ENCODE measurements at regions of chr17 and their contacts with region 1.

Region 1: GRCh38 chr17:63773381-63774140 is at the start of gene CCDC47:
- DNase-seq: peak; percentile 99
- H3K4me3 ChIP-seq: peak within 1 kb of the TSS; percentile 93 to 99
- H3K27ac ChIP-seq: peak within 1 kb of the TSS; percentile 94 to 98
- H3K4me1 ChIP-seq: peaks cover 3% of the 10 kb centered on the region
- H3K27me3 ChIP-seq: no peaks in the 10 kb centered on the region
- CTCF ChIP-seq: peak in 1 of 4 experiments; percentile 36
- POLR2A ChIP-seq: peak; percentile 99
- total RNA-seq, gene CCDC47: 50.3 to 90.8 TPM

Region 2: GRCh38 chr17:63827002-63827771 is 53.6 kb after region 1 on chr17 and contains the starts of genes FTSJ3 and PSMC5:
- intact Hi-C with region 1: loop called (anchors 5 kb)
- DNase-seq: peak; percentile 95
- H3K4me3 ChIP-seq: peak within 1 kb of the TSS; percentile 60 to 73
- H3K27ac ChIP-seq: peak within 1 kb of the TSS; percentile 89 to 90
- H3K4me1 ChIP-seq: peaks cover 5% of the 10 kb centered on the region
- H3K27me3 ChIP-seq: no peaks in the 10 kb centered on the region
- CTCF ChIP-seq: peak in 3 of 4 experiments; percentile 27 to 62 (median 55)
- POLR2A ChIP-seq: peak; percentile 62
- total RNA-seq, gene FTSJ3: 29.4 to 46.6 TPM
- total RNA-seq, gene PSMC5: 94.0 to 109 TPM

Region 3: DNA sequence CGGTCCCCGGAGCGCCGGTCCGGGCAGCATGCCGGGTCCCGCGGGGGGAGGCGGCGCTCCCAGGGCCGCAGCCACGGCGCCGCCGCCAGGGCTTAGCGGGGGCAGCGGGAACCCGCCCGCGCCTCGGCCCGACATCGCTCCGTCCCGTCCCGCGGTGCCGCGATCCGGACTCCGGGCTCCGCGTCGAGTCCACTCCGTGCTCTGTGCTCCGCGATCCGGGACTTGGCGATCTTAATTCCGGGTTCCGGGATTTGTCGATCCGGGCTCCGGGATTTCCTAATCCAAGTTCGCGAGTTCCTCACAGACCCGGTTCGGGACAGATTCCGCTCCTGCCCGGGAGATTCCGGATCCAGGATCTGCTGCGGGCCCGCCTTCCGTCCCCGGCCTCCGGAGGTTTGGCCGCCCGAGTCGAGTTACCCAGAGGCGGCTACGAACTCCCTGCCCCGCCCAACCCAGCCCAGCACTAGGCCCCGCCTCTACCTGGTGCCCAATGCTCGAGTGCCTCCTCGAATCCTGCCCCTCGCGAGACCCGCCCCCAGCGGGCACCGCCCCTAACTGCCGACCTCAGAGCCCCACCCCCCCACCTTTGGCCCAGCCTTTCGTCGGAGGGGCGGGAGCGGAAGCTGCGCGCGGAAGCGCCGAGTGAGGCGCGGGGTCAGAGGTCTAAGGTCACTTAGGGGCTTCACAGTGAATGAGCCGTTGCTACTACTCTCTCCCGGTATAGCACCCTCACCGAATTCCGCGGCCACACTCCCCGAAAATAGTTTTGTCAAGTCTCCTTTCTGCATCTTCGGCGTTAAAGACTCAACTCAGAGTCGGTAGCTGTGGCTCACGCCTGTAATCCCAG is 69.2 kb after region 1 on chr17 and contains the start of gene SMARCD2:
- intact Hi-C with region 1: loop called (anchors 5 kb)
- DNase-seq: peak; percentile 98
- H3K4me3 ChIP-seq: peak within 1 kb of the TSS; percentile 76 to 92
- H3K27ac ChIP-seq: peak within 1 kb of the TSS; percentile 84 to 94
- H3K4me1 ChIP-seq: peaks cover 34% of the 10 kb centered on the region
- H3K27me3 ChIP-seq: no peaks in the 10 kb centered on the region
- CTCF ChIP-seq: peak in 2 of 4 experiments; percentile 15 to 27
- POLR2A ChIP-seq: peak; percentile 78
- total RNA-seq, gene SMARCD2: 182 to 247 TPM